HEK293 (cell line): ENCODE measurements at regions of chr1 and their contacts with region 1.

Region 1: DNA sequence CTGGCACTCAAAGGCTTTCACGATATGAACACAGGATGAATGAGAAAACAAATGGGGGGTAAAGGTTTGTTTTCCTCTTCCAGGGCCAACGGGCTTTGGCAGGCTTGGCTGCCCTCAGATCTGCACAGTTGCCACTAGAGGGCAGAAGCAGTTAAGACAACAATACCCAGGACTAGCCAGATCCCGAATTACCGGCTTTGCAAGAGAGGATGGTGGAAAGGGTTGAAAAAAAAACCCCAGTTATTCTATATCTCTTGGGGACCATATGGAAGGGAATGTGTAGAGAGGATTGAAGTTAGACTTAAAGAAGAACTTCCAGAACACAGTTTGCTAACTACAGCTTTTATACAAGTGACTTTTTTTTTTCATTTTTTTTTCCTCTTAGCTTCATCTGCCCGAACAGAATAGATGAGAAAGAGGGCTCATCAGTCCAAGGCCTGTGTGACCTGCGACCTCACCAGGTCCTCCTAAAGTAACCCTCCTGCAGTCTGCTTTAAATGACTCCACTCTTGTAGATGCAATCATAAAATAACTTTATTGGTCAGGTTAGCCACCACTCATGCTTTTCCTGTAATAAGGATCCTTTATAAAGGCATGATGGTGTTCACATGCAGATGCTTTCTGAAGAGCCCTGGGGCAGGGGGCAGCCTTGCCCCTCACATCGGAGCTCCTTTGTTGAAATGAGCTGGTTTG is 10.7 kb downstream of the FMOD start:
- H3K4me3 ChIP-seq: no peak overlapping the region
- H3K27ac ChIP-seq: no peak overlapping the region
- H3K4me1 ChIP-seq: no peaks in the 10 kb centered on the region
- CTCF ChIP-seq: peak; percentile 46; the same call in 1 of the 2 replicates

Region 2: DNA sequence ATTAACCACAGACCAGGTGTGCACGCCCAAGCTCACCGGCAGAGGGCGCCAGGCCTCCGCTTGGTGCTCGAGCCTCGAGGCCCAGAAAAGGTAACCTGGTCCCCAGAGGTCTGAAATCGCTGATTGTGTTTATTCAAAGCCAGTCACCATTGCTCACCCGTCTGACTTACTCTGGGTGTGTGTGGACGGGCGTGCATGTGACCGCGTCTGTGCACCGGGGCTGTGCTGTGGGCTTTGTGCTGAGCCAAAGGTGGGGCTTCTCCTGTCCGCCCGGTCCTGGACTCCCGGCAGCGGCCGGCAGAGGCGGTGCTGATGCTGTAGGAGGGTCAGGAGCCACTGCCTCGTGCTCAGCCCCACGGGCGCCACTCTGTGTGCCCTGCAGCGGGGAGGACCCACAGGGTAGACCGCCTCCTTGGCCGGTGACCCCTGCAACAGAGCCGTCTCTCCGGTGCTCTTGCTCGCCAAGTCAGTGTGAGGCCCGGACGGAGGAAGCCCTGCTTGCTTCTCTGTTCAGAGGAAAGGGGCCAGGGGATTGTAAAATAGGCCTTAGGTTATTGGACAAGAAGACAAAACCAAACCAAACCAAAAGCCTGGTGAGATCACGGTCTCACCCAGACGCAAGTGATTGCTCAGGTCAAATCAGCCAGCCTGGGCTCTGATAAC is 66.9 kb before region 1 on chr1:
- CTCF ChIA-PET with region 1: interaction called, 371 read pairs
- POLR2A ChIA-PET with region 1: interaction called, 4 read pairs
- H3K4me3 ChIP-seq: no peak overlapping the region
- H3K27ac ChIP-seq: no peak overlapping the region
- H3K4me1 ChIP-seq: peaks cover 2% of the 10 kb centered on the region; the same call in 1 of the 2 replicates
- CTCF ChIP-seq: peak; percentile 95

Region 3: GRCh38 chr1:203351037-203352013 is 11.1 kb after region 1 on chr1 and contains the start of gene FMOD:
- CTCF ChIA-PET with region 1: interaction called, 40 read pairs
- POLR2A ChIA-PET with region 1: no interaction called
- H3K4me3 ChIP-seq: no peak within 1 kb of the TSS
- H3K27ac ChIP-seq: no peak within 1 kb of the TSS
- H3K4me1 ChIP-seq: no peaks in the 10 kb centered on the region
- CTCF ChIP-seq: no peak

Region 4: GRCh38 chr1:203440771-203441170 is 100.5 kb after region 1 on chr1:
- CTCF ChIA-PET with region 1: interaction called, 64 read pairs
- POLR2A ChIA-PET with region 1: no interaction called
- H3K4me3 ChIP-seq: no peak overlapping the region
- H3K27ac ChIP-seq: no peak overlapping the region
- H3K4me1 ChIP-seq: no peaks in the 10 kb centered on the region
- CTCF ChIP-seq: peak; percentile 80

Region 5: GRCh38 chr1:203492748-203493130 is 152.5 kb after region 1 on chr1:
- CTCF ChIA-PET with region 1: interaction called, 182 read pairs
- POLR2A ChIA-PET with region 1: interaction called, 3 read pairs
- H3K4me3 ChIP-seq: no peak overlapping the region
- H3K27ac ChIP-seq: no peak overlapping the region
- H3K4me1 ChIP-seq: no peaks in the 10 kb centered on the region
- CTCF ChIP-seq: no peak

Region 6: DNA sequence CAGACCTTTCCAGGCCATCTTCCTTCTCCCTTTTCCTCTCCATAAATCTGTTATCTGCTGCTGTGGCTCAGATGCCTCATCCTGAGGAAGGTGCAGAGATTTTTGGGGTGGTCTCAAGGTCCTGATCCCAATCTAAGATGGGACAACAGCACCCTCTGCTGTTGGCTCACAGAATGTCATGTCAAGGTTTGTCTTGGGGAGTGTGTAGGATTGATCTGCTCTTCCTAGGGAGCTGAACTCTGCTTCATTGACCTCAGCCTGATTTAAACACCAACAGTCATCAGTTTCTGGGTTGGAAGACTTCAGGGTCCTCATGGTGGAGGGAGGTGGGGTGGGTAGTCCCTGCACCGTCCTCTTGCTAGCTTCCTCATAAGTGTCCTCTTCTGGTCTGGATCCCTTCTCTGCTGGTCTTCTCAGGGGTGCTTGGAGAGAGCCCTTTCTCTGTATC is 361.9 kb after region 1 on chr1:
- CTCF ChIA-PET with region 1: interaction called, 83 read pairs
- POLR2A ChIA-PET with region 1: no interaction called
- H3K4me3 ChIP-seq: no peak overlapping the region
- H3K27ac ChIP-seq: no peak overlapping the region
- H3K4me1 ChIP-seq: no peaks in the 10 kb centered on the region
- CTCF ChIP-seq: peak; percentile 85